Kidney (tissue), 22 donors: ENCODE measurements at regions of chr1 and their contacts with region 1.

Region 1: GRCh38 chr1:212062832-212063438 is 27.4 kb downstream of the DTL start:
- DNase-seq: peak in 2 of 5 donors; percentile 24 to 61
- H3K4me3 ChIP-seq: no peak overlapping the region
- H3K27ac ChIP-seq: no peak overlapping the region
- H3K4me1 ChIP-seq: no peaks in the 10 kb centered on the region
- H3K27me3 ChIP-seq: no peaks in the 10 kb centered on the region
- CTCF ChIP-seq: peak; percentile 58

Region 2: GRCh38 chr1:211606914-211607755 is 455.8 kb before region 1 on chr1:
- intact Hi-C with region 1: no loop called
- DNase-seq: no peak
- H3K4me3 ChIP-seq: no peak overlapping the region
- H3K27ac ChIP-seq: no peak overlapping the region
- H3K4me1 ChIP-seq: no peaks in the 10 kb centered on the region
- H3K27me3 ChIP-seq: no peaks in the 10 kb centered on the region
- CTCF ChIP-seq: no peak

Region 3: GRCh38 chr1:211788626-211789025 is 274.3 kb before region 1 on chr1:
- intact Hi-C with region 1: no loop called
- DNase-seq: peak in 1 of 5 donors; percentile 14
- H3K4me3 ChIP-seq: no peak overlapping the region
- H3K27ac ChIP-seq: no peak overlapping the region
- H3K4me1 ChIP-seq: peaks cover 0 to 4% (median 0%) of the 10 kb centered on the region in 3 donors
- H3K27me3 ChIP-seq: no peaks in the 10 kb centered on the region
- CTCF ChIP-seq: no peak

Region 4: GRCh38 chr1:212368073-212368484 is 305.1 kb after region 1 on chr1:
- intact Hi-C with region 1: loop called (anchors 10 kb)
- DNase-seq: peak in 4 of 5 donors; percentile 27 to 68 (median 48)
- H3K4me3 ChIP-seq: no peak overlapping the region
- H3K27ac ChIP-seq: no peak overlapping the region
- H3K4me1 ChIP-seq: no peaks in the 10 kb centered on the region
- H3K27me3 ChIP-seq: no peaks in the 10 kb centered on the region
- CTCF ChIP-seq: peak; percentile 87

Region 5: GRCh38 chr1:212455803-212456528 is 393.0 kb after region 1 on chr1:
- intact Hi-C with region 1: loop called (anchors 10 kb)
- DNase-seq: peak; percentile 83 to 95 (median 87)
- H3K4me3 ChIP-seq: no peak overlapping the region
- H3K27ac ChIP-seq: no peak overlapping the region
- H3K4me1 ChIP-seq: peaks cover 0 to 2% (median 0%) of the 10 kb centered on the region in 3 donors
- H3K27me3 ChIP-seq: no peaks in the 10 kb centered on the region
- CTCF ChIP-seq: peak; percentile 96